ENCODE measurements at regions of chr20 and their contacts with region 1.

Region 1: DNA sequence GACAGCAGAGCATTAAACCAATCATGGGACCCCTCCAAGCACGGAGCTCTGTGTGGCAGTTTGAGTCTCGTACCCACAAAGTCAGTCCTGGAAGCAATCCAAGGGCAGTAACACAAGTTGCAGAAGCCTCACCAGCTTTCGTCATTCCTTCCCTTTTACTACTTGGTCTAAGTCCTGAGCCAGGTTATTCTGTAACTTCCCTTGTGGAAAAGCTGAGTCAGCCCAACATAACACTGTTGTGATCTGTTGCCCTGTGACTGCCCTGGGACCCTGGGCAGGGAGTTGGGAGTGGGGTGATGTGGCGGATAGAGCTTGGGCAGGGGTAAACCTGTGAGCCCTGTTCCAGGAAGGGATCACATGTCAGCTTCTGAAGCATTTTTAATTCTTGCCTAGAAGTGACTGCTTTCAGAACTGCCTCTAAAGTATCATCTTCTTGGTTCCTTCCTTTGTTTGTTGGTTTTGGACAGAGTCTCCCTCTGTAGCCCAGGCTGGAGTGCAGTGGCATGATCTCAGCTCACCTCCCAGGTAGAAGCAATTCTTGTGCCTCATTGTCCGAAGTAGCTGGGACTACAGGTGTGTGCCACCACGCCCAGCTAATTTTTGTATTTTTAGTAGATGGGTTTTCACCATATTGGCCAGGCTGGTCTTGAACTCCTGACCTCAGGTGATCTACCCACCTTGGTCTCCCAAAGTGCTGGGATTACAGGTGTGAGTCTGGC is 183.7 kb upstream of the JAG1 start:
- DNase-seq: peak; percentile 33 to 56
- H3K4me3 ChIP-seq: no peak overlapping the region
- H3K4me3 Mint-ChIP-seq: no peak overlapping the region
- H3K27ac Mint-ChIP-seq: peak overlapping the region; percentile 71
- H3K4me1 ChIP-seq: peaks cover 59% of the 10 kb centered on the region
- H3K4me1 Mint-ChIP-seq: peaks cover 25% of the 10 kb centered on the region
- H3K27me3 ChIP-seq: no peaks in the 10 kb centered on the region
- H3K27me3 Mint-ChIP-seq: no peaks in the 10 kb centered on the region
- CTCF ChIP-seq: no peak

Region 2: GRCh38 chr20:11047559-11047958 is 190.0 kb after region 1 on chr20:
- CTCF ChIA-PET with region 1: no interaction called
- POLR2A ChIA-PET with region 1: no interaction called
- intact Hi-C with region 1: loop called (anchors 1 kb)
- DNase-seq: peak; percentile 41 to 74
- H3K4me3 ChIP-seq: no peak overlapping the region
- H3K4me3 Mint-ChIP-seq: no peak overlapping the region
- H3K27ac Mint-ChIP-seq: no peak overlapping the region
- H3K4me1 ChIP-seq: peaks cover 50% of the 10 kb centered on the region
- H3K4me1 Mint-ChIP-seq: peaks cover 23% of the 10 kb centered on the region
- H3K27me3 ChIP-seq: no peaks in the 10 kb centered on the region
- H3K27me3 Mint-ChIP-seq: no peaks in the 10 kb centered on the region
- CTCF ChIP-seq: no peak

Region 3: GRCh38 chr20:11153819-11154218 is 296.3 kb after region 1 on chr20:
- CTCF ChIA-PET with region 1: no interaction called
- POLR2A ChIA-PET with region 1: no interaction called
- intact Hi-C with region 1: no loop called
- DNase-seq: no peak
- H3K4me3 ChIP-seq: no peak overlapping the region
- H3K4me3 Mint-ChIP-seq: no peak overlapping the region
- H3K27ac Mint-ChIP-seq: no peak overlapping the region
- H3K4me1 ChIP-seq: no peaks in the 10 kb centered on the region
- H3K4me1 Mint-ChIP-seq: no peaks in the 10 kb centered on the region
- H3K27me3 ChIP-seq: no peaks in the 10 kb centered on the region
- H3K27me3 Mint-ChIP-seq: no peaks in the 10 kb centered on the region
- CTCF ChIP-seq: no peak